Dorsolateral prefrontal cortex (tissue), 120 donors: ENCODE measurements at regions of chr12 and their contacts with region 1.

Region 1: DNA sequence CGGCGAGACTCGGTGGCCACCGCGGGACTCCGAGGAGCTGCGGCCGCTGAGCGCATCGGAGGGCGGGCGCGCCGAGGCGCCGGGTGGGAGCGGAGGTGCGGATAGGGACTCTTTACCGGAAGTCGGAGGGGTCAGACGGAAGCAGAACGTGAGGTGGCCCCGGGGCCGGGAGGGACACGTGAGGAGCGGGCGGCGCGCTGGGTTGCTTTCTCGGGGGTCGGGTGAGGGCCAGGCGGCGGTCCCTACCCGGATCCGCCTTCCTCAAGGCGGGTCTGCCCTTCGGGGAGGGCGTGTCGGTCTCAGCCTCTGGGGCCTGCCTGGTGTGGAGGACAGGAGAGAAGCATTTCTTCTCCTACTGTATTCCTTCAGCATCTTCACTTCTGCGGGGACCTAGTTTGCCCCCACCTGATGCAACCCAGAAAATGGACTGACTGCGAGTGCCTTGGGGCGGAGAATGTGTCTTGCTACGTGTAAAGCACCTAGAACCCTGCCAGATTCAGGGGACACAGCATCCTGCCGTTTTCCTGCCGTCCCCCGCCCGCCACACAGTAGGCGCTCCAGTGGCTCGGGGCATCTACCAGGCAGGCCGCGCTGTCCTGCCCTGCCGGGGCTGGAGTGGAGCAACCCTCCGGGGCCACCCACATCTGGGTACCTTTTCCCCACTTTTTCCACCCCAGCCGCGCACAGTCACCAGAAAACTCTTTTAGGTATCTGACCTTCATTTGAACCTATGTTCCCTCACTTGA is 517 bp upstream of the ATXN2 start:
- DNase-seq: peak; percentile 68 to 88 (median 84)
- H3K4me3 ChIP-seq: peak overlapping the region; percentile 56 to 97 (median 92)
- H3K27ac ChIP-seq: peak overlapping the region; percentile 68 to 99 (median 95)
- H3K27me3 ChIP-seq: no peaks in the 10 kb centered on the region
- CTCF ChIP-seq: peak in 6 of 56 donors; percentile 3 to 17 (median 15)

Region 2: GRCh38 chr12:111405149-111405860 is 194.3 kb before region 1 on chr12:
- intact Hi-C with region 1: loop called in 1 of 2 experiments (anchors 10 kb)
- DNase-seq: peak; percentile 82 to 93 (median 88)
- H3K4me3 ChIP-seq: peak overlapping the region; percentile 57 to 97 (median 87)
- H3K27ac ChIP-seq: peak overlapping the region in 50 of 59 donors; percentile 26 to 93 (median 78)
- H3K27me3 ChIP-seq: no peaks in the 10 kb centered on the region
- CTCF ChIP-seq: peak in 53 of 56 donors; percentile 23 to 75 (median 58)

Region 3: GRCh38 chr12:111636209-111636945 is 36.7 kb after region 1 on chr12:
- intact Hi-C with region 1: loop called in 1 of 2 experiments (anchors 5 kb)
- DNase-seq: peak; percentile 23 to 75 (median 57)
- H3K4me3 ChIP-seq: peak overlapping the region in 31 of 59 donors; percentile 5 to 44 (median 19)
- H3K27ac ChIP-seq: peak overlapping the region in 51 of 59 donors; percentile 9 to 86 (median 66)
- H3K27me3 ChIP-seq: no peaks in the 10 kb centered on the region
- CTCF ChIP-seq: no peak

Region 4: DNA sequence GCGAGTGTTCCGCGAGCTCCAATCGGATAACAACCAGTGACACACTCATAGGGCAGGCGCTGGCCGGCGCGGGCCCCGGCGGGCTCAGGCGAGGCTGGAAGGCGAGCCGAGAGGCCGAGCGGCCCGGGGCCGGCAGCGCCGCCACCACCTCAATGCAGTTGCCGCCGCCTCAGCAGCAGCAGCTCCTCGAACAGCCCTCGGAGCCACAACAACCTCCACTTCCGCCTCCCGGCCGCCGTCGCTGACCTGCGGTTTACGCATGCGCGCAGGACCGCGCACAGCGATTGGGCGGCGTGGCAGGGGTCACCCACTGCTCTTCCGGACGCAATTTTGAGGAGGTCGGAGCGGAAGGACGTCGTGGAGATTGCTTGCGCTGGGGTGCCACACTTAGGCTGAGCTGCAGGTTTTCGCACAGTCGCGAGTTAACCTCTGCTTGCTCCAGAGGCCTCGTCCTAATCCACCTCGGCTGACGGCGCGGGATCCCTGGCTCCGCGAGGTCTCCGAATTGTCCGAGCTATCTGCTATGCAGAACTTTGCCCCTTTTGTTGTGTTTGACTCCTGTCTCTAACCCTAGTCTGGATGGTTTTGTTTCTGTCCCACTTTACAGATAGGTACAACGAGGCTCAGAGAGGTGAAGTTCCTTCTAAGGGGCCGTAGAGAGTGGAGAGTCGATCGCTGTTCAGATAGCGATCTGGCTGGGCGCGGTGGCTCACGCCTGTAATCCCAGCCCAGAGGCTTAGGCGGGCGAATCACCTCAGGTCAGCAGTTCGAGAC is 86.3 kb after region 1 on chr12 and contains the starts of genes ACAD10 and BRAP:
- intact Hi-C with region 1: loop called (anchors 2 to 5 kb)
- DNase-seq: peak; percentile 83 to 95 (median 89)
- H3K4me3 ChIP-seq: peak within 1 kb of the TSS; percentile 64 to 100 (median 96)
- H3K27ac ChIP-seq: peak within 1 kb of the TSS; percentile 5 to 93 (median 80)
- H3K27me3 ChIP-seq: no peaks in the 10 kb centered on the region
- CTCF ChIP-seq: peak in 40 of 56 donors; percentile 6 to 63 (median 40)
- total RNA-seq, gene ACAD10: 19.3 to 49.9 (median 31.8) TPM
- total RNA-seq, gene BRAP: 20.6 to 31.0 (median 25.6) TPM